ENCODE measurements at regions of chr5 and their contacts with region 1.

Region 1: GRCh38 chr5:159106569-159107282 is 7.0 kb upstream of the EBF1 start:
- ATAC-seq: peak; percentile 85 to 99 (median 94)
- H3K4me3 ChIP-seq: peak overlapping the region; percentile 21 to 37 (median 28)
- H3K27ac ChIP-seq: no peak overlapping the region
- H3K4me1 ChIP-seq: peaks cover 0 to 10% of the 10 kb centered on the region in 2 donors

Region 2: DNA sequence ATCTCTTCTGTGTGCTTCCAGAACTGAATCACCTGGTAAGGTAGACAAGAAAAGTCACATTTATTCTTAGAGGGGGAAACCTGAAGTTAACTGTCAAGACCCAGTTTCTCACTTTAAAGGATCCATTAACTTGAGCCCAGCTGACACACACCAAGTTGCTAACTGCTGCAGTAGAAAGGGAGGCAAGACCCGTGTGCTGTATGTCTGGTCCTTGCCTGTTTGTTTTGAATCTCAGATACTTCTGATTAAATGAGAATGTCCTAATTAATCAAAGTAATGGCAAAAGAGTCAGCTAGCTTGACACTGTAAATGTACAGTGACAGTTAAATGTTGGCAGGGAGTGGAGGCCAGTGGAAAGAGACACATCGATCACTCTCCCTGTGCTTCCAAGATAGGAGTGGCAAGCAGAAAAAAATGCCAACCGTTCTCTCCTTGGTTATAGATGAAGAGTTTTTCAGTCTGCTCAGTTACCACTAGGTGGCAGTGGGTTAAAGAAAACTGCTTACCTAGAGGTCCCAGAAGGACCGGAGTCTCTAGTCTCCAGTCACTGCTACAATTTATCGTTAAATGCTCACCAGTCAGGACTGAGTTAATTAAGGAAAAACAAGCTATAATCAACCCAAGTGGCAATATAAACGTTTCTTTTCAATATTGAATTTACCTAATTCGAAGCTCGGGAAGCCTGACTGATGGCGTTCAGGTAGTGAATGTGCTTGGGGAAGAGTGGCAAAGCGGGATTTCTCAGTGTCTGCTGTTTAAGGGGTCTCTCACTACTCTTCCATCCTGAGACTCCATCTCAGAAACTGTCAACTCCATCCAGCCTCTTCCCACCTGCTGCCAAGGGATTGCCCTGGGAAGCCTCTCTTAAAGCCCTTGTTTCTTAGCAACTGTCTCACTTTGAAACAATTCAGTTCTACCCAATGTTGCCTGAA is 1344.8 kb before region 1 on chr5:
- in situ Hi-C with region 1: loop called in 3 of 9 experiments (anchors 25 kb)
- ATAC-seq: peak; percentile 95 to 99 (median 98)
- H3K4me3 ChIP-seq: no peak overlapping the region
- H3K27ac ChIP-seq: no peak overlapping the region
- H3K4me1 ChIP-seq: peaks cover 10 to 17% of the 10 kb centered on the region in 2 donors

Region 3: DNA sequence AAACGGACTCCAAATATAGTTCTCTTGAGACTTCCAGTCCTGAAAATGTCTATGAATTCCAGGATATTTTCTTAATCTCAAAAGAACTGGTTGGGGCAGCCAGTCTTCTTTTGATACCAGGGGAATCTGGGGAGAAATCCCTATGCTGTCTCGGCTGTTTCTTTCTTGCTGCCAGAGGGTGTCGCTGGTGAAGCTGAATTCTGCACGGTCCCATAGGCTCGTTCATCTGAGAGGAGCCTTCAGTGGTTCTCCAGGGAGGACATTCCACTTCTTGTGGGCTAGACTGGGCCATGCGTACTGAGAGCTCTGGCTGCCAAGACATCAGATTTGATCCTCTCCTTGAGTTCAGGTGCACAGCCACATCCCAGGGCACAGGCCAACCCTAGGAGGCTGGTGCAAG is 1092.8 kb before region 1 on chr5:
- in situ Hi-C with region 1: loop called in 1 of 9 experiments (anchors 25 kb)
- ATAC-seq: peak in 5 of 8 experiments; percentile 36 to 93 (median 75)
- H3K4me3 ChIP-seq: no peak overlapping the region
- H3K27ac ChIP-seq: no peak overlapping the region
- H3K4me1 ChIP-seq: peaks cover 24 to 34% of the 10 kb centered on the region in 2 donors

Region 4: GRCh38 chr5:158174918-158175851 is 931.5 kb before region 1 on chr5:
- in situ Hi-C with region 1: loop called in 6 of 9 experiments (anchors 10 to 25 kb)
- ATAC-seq: peak; percentile 85 to 96 (median 90)
- H3K4me3 ChIP-seq: no peak overlapping the region
- H3K27ac ChIP-seq: no peak overlapping the region
- H3K4me1 ChIP-seq: peaks cover 9 to 18% of the 10 kb centered on the region in 2 donors

Region 5: GRCh38 chr5:158695595-158696330 is 411.0 kb before region 1 on chr5:
- in situ Hi-C with region 1: loop called (anchors 5 to 25 kb)
- ATAC-seq: peak; percentile 75 to 94 (median 82)
- H3K4me3 ChIP-seq: no peak overlapping the region
- H3K27ac ChIP-seq: no peak overlapping the region
- H3K4me1 ChIP-seq: peaks cover 9 to 26% of the 10 kb centered on the region in 2 donors

Region 6: DNA sequence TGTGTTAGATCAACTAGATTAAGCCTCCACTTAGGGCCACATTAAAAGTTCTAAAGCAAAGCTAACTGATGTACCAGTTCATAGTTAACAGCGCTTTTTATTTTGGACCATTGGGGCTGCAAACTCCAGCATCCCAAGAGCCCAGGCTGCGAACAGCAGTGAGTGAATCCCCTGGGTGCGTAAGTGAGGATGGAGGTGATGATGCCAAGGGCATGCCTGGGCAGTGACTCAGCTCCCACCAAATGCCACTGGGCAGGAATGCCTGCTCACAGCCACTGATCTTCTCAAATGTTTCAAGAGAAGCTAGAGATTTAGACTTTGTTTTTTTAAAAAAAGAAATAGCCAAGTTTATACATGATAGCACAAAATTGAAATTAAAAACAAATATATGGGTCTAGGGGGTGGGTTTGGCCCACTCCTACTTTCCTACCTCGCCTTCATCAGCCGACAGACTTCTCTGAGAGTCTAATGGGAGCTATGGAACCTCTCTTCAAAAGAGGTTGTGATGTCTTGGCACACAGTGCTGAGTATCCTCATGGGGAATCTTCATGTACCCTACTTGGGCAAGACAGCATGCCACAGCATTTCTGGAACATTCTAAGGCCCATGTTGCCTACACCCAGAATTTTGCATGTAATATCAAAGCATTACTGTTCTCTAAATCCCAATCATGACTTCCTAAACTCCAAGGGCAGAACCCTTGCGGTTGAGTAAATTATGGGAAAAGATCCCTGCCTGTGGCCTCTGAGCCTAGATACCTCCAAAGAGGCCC is 405.1 kb before region 1 on chr5:
- in situ Hi-C with region 1: loop called (anchors 5 to 25 kb)
- ATAC-seq: no peak
- H3K4me3 ChIP-seq: no peak overlapping the region
- H3K27ac ChIP-seq: no peak overlapping the region
- H3K4me1 ChIP-seq: peaks cover 6 to 12% of the 10 kb centered on the region in 2 donors

Region 7: GRCh38 chr5:158875272-158875679 is 231.4 kb before region 1 on chr5:
- in situ Hi-C with region 1: no loop called
- ATAC-seq: peak in 3 of 8 experiments; percentile 42 to 57 (median 51)
- H3K4me3 ChIP-seq: no peak overlapping the region
- H3K27ac ChIP-seq: no peak overlapping the region
- H3K4me1 ChIP-seq: peaks cover 11 to 23% of the 10 kb centered on the region in 2 donors